PC-3 (cell line): ENCODE measurements at regions of chr1 and their contacts with region 1.

Region 1: GRCh38 chr1:239386453-239387303 is at the start of gene CHRM3:
- DNase-seq: peak; percentile 90
- ATAC-seq: peak; percentile 82
- H3K4me3 ChIP-seq: peak within 1 kb of the TSS; percentile 76
- H3K27ac ChIP-seq: 0 out of 2 replicates have a peak within 1 kb of the TSS, but pooled peaks have one; percentile 9
- H3K4me1 ChIP-seq: peaks cover 15% of the 10 kb centered on the region; the same call in 1 of the 2 replicates
- H3K27me3 ChIP-seq: peaks cover 30% of the 10 kb centered on the region
- CTCF ChIP-seq: peak; percentile 60
- total RNA-seq, gene CHRM3: 1.2 and 3.5 TPM in 2 replicates

Region 2: DNA sequence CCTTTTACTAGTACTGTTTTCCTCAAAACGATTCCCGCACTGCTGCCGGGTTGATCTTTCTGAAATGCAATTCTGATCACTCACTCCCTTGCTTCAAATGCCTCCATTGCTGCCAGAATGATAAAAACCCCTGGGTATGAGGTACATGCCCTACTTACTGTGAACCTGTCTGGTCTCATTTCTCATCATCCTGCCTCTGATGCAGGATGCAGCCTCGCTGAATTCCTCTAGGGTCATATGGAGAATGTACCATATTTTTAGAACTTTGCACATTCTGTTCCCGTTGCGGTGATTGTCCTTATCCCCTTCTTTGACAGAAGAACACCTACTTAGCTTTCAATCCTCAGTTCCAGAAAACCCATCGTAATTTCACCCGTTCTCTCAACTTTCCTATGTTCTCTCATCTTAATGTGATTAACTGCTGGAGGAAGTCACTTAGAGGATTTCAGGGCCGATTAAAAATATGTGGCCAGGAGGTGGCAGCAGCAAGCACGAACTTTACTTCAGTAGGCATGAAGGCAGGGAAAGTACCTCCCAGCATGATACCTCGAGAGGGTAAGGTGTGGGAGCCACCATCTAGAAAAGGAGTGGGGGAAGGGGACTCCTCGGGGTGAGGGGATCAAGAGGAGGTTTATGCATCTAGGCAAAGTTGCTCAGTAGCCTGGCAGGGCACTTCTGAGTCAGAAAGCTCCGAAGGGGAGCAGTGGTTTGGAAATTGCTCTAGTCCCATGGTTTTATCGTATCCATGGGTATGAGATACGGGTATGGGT is 1134.5 kb before region 1 on chr1:
- CTCF ChIA-PET with region 1: no interaction called
- POLR2A ChIA-PET with region 1: no interaction called
- intact Hi-C with region 1: loop called (anchors 5 kb)
- DNase-seq: peak; percentile 70
- ATAC-seq: peak; percentile 86
- H3K4me3 ChIP-seq: no peak overlapping the region
- H3K27ac ChIP-seq: no peak overlapping the region
- H3K4me1 ChIP-seq: no peaks in the 10 kb centered on the region
- H3K27me3 ChIP-seq: no peaks in the 10 kb centered on the region
- CTCF ChIP-seq: peak; percentile 70

Region 3: GRCh38 chr1:238653693-238654321 is 732.9 kb before region 1 on chr1:
- CTCF ChIA-PET with region 1: no interaction called
- POLR2A ChIA-PET with region 1: no interaction called
- intact Hi-C with region 1: loop called (anchors 10 kb)
- DNase-seq: peak; percentile 63
- ATAC-seq: no peak
- H3K4me3 ChIP-seq: no peak overlapping the region
- H3K27ac ChIP-seq: no peak overlapping the region
- H3K4me1 ChIP-seq: peaks cover 25% of the 10 kb centered on the region
- H3K27me3 ChIP-seq: no peaks in the 10 kb centered on the region
- CTCF ChIP-seq: no peak

Region 4: DNA sequence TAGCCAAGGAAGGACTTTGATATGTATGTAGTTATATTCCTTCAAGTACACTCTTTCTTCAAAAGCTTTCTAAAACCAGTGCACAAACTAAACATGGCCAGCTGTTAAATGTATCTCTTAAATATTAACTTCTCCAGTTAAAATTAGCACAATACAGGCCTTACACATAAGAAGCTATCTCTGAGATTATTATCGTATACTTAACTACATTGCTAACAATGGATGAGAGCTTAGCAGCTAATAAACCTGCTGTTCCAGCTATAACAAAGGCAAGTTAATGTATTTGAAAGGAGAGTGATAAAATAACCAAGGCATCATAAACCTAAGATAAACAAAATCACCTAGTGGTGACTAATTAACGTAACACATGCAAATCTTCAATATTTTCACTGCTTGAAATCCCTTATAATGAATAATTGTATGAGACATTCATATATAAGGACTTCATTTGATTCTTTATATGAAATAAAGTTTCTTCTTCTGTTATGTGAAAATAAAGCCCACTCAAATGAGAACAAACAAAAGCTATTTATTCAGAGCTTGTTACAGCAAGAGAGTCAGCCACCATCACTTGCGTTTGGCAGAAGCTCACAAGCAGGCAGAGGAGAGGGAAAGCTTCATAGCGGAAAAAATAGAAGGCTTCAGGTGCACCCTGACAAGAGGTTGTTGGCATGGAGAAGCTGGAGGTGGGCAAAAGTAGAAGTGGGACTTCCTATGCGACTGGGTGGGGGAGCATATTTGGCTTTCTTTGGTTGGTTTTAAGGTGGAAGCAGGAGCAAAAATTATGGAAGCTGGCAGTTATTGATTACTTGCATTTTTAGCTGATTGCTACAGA is 274.4 kb before region 1 on chr1:
- CTCF ChIA-PET with region 1: no interaction called
- POLR2A ChIA-PET with region 1: no interaction called
- intact Hi-C with region 1: no loop called
- DNase-seq: no peak
- ATAC-seq: peak; percentile 51
- H3K4me3 ChIP-seq: no peak overlapping the region
- H3K27ac ChIP-seq: no peak overlapping the region
- H3K4me1 ChIP-seq: no peaks in the 10 kb centered on the region
- H3K27me3 ChIP-seq: no peaks in the 10 kb centered on the region
- CTCF ChIP-seq: no peak

Region 5: GRCh38 chr1:239164451-239165180 is 222.1 kb before region 1 on chr1:
- CTCF ChIA-PET with region 1: no interaction called
- POLR2A ChIA-PET with region 1: interaction called, 3 read pairs
- intact Hi-C with region 1: loop called (anchors 10 kb)
- DNase-seq: peak; percentile 97
- ATAC-seq: peak; percentile 46
- H3K4me3 ChIP-seq: no peak overlapping the region
- H3K27ac ChIP-seq: peak overlapping the region; percentile 38
- H3K4me1 ChIP-seq: peaks cover 26% of the 10 kb centered on the region
- H3K27me3 ChIP-seq: no peaks in the 10 kb centered on the region
- CTCF ChIP-seq: no peak

Region 6: DNA sequence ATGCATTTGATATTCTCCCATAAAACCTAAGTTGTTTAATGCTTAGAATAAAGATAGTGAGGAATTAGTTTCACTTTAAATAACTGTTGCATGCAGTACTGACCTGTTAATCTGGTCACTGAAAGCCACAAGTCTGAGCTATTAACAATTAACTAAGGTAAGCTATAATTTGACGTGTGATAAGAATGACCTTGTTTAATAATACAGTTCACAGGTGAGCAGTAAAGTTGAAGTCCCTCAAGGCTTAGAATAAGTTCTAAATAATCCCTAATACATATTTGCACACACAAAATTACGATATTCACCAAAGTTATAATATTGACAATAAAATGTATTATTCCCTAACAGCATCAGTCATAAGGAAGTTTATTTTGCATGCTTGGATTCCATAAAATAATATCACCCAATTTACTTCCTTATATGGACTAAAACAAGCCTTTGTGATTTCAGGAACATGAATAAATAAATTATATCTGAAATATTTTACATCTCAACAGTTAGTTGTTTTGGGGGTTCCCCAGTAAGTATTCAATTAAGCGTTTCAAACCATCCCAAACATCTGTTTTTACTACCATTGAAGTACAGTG is 71.0 kb before region 1 on chr1:
- CTCF ChIA-PET with region 1: no interaction called
- POLR2A ChIA-PET with region 1: no interaction called
- intact Hi-C with region 1: loop called (anchors 2 kb)
- DNase-seq: no peak
- ATAC-seq: peak; percentile 74
- H3K4me3 ChIP-seq: peak overlapping the region; percentile 54
- H3K27ac ChIP-seq: no peak overlapping the region
- H3K4me1 ChIP-seq: no peaks in the 10 kb centered on the region
- H3K27me3 ChIP-seq: no peaks in the 10 kb centered on the region
- CTCF ChIP-seq: no peak

Region 7: DNA sequence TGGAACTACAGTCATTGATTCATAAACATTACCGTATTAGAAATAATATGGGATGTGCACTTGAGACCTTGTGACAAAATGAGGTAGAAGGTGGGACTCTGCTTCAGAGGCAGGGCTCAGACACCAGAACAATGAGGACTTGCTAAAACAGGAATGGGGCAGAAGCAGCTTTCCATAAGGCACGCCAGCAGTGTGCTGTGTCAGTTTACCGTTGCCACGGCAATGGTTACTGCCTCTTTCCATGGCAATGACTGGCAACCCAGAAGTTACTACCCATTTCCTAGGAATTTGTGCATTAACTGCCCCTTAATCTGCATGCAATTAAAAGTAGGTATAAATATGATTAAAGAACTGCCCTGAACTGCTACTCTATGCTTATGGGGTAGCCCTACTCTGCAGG is 168.7 kb after region 1 on chr1:
- CTCF ChIA-PET with region 1: no interaction called
- POLR2A ChIA-PET with region 1: no interaction called
- intact Hi-C with region 1: no loop called
- DNase-seq: no peak
- ATAC-seq: no peak
- H3K4me3 ChIP-seq: no peak overlapping the region
- H3K27ac ChIP-seq: no peak overlapping the region
- H3K4me1 ChIP-seq: peaks cover 22% of the 10 kb centered on the region
- H3K27me3 ChIP-seq: no peaks in the 10 kb centered on the region
- CTCF ChIP-seq: no peak

Region 8: DNA sequence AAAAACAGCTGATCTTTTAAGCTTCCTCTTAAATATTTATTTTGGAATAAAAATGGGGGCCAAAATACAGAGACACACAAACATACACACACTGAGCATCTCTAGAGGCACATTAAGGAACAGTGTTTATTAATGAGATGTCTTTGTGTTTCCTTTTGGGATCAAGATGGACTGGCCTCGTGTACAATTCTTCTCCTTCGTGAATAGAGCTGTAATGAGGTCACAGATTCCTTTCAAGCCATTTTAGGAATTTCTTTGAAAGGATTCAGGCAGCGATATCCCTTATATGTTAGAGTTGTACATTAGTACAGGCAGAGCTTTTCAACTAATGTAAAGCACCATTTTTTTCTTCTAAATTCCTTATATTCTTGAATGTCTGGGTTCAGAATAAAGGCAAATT is 295.4 kb after region 1 on chr1:
- CTCF ChIA-PET with region 1: no interaction called
- POLR2A ChIA-PET with region 1: no interaction called
- intact Hi-C with region 1: loop called (anchors 2 kb)
- DNase-seq: no peak
- ATAC-seq: no peak
- H3K4me3 ChIP-seq: no peak overlapping the region
- H3K27ac ChIP-seq: peak overlapping the region; percentile 57
- H3K4me1 ChIP-seq: peaks cover 30% of the 10 kb centered on the region
- H3K27me3 ChIP-seq: no peaks in the 10 kb centered on the region
- CTCF ChIP-seq: no peak

Region 9: GRCh38 chr1:239976130-239976968 is 589.7 kb after region 1 on chr1:
- CTCF ChIA-PET with region 1: no interaction called
- POLR2A ChIA-PET with region 1: no interaction called
- intact Hi-C with region 1: loop called (anchors 1 kb)
- DNase-seq: peak; percentile 86
- ATAC-seq: peak; percentile 84
- H3K4me3 ChIP-seq: no peak overlapping the region
- H3K27ac ChIP-seq: no peak overlapping the region
- H3K4me1 ChIP-seq: peaks cover 6% of the 10 kb centered on the region; the same call in 1 of the 2 replicates
- H3K27me3 ChIP-seq: peaks cover under 1% of the 10 kb centered on the region; the same call in 1 of the 2 replicates
- CTCF ChIP-seq: peak; percentile 99